ENCODE measurements at regions of chr4 and their contacts with region 1.

Region 1: GRCh38 chr4:15882675-15883086 is 55.9 kb downstream of the FGFBP1 start:
- DNase-seq: peak; percentile 62
- H3K4me3 Mint-ChIP-seq: no peak overlapping the region
- H3K27ac Mint-ChIP-seq: no peak overlapping the region
- H3K4me1 Mint-ChIP-seq: no peaks in the 10 kb centered on the region
- H3K27me3 Mint-ChIP-seq: peaks cover 10% of the 10 kb centered on the region

Region 2: DNA sequence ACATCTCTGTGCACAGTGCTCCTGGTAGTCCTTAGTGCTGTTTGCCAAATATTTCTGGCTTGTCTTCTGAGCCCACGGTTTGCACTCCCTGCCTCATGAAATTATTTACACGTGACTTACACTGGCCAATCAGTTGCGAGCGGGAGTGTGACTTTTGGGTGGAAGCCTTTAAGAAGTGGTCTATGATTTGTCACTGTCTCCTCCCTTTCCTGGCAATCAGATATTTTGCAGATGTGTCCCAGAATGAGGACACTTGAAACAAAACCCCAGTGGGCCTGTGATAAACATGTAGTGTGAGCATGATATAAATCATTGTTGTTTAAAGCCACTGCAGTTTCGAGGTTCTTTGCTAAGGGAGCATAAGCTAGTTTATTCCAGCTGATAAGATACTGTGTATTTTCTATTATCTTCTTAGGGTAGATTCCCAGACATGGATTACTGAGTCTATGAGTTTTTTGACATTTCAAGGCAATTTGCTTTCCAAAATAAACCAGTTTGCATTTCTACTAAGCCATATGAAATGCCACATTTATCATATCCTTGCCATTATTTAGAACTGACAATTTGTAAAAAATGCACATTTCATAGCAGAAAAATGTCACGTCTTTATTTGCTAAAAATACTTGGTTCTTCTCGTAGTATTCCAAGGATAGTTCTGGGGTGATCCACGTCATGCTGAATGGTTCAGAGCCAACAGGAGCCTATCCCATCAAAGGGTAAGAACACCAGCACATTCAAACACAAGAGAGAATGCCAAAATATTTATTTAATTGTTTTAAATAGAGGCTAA is 167.8 kb before region 1 on chr4:
- CTCF ChIA-PET with region 1: no interaction called
- POLR2A ChIA-PET with region 1: no interaction called
- DNase-seq: no peak
- H3K4me3 Mint-ChIP-seq: no peak overlapping the region
- H3K27ac Mint-ChIP-seq: no peak overlapping the region
- H3K4me1 Mint-ChIP-seq: no peaks in the 10 kb centered on the region
- H3K27me3 Mint-ChIP-seq: no peaks in the 10 kb centered on the region

Region 3: GRCh38 chr4:15836362-15836761 is 46.3 kb before region 1 on chr4:
- CTCF ChIA-PET with region 1: no interaction called
- POLR2A ChIA-PET with region 1: no interaction called
- DNase-seq: no peak
- H3K4me3 Mint-ChIP-seq: no peak overlapping the region
- H3K27ac Mint-ChIP-seq: no peak overlapping the region
- H3K4me1 Mint-ChIP-seq: peaks cover 23% of the 10 kb centered on the region
- H3K27me3 Mint-ChIP-seq: no peaks in the 10 kb centered on the region

Region 4: DNA sequence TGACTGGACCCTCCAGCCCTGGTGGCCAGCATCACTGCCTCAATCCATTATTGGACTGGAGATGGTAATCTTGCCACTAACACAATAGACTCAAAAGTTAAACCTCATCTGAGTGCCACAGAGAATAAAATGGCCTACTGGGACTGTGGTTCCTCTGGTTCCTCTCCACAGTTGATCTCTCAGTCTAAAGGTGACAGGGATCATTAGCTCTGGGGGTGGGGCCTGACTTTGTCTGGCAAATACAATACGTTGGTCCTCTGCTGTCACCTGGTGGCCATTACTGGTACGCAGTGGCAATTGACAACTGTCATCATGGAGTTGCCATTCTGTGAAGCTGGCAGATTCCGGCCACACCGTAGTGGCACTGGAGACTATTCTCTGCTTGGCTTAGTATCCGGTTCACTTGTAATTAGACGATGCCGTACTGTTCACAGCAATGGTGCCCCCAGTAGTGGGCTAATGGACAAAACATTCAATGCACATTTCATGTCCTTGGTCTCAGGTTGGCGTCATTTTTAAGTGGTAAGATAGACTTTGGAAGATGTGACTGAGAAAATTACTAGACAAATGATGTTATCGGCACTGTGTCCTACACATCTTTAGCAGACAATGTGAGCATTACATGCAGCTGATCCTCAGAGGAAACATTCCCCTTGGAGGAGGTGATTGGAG is 73.6 kb after region 1 on chr4:
- CTCF ChIA-PET with region 1: interaction called, 15 read pairs
- POLR2A ChIA-PET with region 1: no interaction called
- DNase-seq: peak; percentile 87
- H3K4me3 Mint-ChIP-seq: no peak overlapping the region
- H3K27ac Mint-ChIP-seq: no peak overlapping the region
- H3K4me1 Mint-ChIP-seq: peaks cover 10% of the 10 kb centered on the region
- H3K27me3 Mint-ChIP-seq: peaks cover 9% of the 10 kb centered on the region

Region 5: DNA sequence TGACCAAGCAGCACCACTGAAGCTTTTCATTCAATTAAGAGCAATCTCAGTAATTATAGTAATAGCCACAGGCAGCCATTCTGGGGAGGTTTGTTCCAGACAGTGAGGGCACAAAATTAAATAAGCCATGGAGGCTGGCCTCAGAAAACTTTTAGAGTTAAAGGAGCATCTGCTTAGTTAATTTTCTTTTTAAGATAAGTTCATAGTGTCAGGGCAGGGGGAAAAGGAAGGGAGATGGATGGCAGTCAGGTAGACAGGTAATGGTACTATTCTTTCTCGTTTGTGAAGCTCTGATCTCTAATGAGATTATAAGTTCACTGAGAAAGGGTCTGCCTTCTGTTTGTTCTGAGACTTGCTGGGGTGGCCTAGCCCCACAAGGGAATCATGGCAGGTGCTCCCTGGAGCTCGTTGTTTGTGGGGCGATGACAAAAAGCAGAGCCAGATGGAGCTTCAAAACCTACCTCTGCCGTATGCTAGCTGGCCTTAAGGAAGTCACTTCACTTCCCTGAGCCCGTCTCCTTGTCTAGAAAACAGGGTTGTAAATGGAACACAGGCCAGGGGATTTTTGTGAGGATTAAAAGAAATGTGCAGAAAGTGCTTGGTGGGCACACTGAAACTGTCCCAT is 124.9 kb after region 1 on chr4:
- CTCF ChIA-PET with region 1: no interaction called
- POLR2A ChIA-PET with region 1: no interaction called
- DNase-seq: no peak
- H3K4me3 Mint-ChIP-seq: no peak overlapping the region
- H3K27ac Mint-ChIP-seq: no peak overlapping the region
- H3K4me1 Mint-ChIP-seq: no peaks in the 10 kb centered on the region
- H3K27me3 Mint-ChIP-seq: peaks cover 4% of the 10 kb centered on the region

Region 6: DNA sequence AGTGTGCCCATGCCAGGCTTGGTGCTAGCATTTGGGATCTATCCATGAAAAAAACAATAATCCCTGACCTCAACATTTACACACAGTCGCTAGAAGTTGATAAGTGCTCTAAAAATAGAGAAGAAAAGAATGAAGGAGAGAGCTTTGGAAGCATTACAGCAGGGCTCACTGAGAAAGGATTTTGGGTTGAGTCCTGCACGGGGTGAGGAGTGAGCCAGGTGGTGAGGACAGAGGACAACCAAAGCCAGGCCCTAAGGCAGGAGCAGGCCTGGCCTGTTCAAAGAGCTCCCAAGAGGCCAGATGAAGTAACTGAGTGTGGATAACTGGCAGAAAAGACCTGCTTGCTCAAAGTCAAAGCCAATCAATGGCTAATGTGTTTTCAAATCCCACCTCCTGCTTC is 221.8 kb after region 1 on chr4:
- CTCF ChIA-PET with region 1: no interaction called
- POLR2A ChIA-PET with region 1: no interaction called
- DNase-seq: no peak
- H3K4me3 Mint-ChIP-seq: no peak overlapping the region
- H3K27ac Mint-ChIP-seq: no peak overlapping the region
- H3K4me1 Mint-ChIP-seq: no peaks in the 10 kb centered on the region
- H3K27me3 Mint-ChIP-seq: peaks cover 4% of the 10 kb centered on the region

Measured in activated CD4-positive, alpha-beta T cell treated with anti-CD3 and anti-CD28 coated beads, Interleukin-2, amount 10 ng/mL, durations not matched to agents 7 days and 5 days (primary cell).